OCI-LY7 (cell line): ENCODE measurements at regions of chr3 and their contacts with region 1.

Region 1: GRCh38 chr3:48400824-48401433 is 28.9 kb downstream of the FBXW12 start:
- DNase-seq: peak; percentile 79
- H3K4me3 ChIP-seq: no peak overlapping the region
- H3K27ac ChIP-seq: no peak overlapping the region
- H3K4me1 ChIP-seq: no peaks in the 10 kb centered on the region
- CTCF ChIP-seq: peak; percentile 92

Region 2: DNA sequence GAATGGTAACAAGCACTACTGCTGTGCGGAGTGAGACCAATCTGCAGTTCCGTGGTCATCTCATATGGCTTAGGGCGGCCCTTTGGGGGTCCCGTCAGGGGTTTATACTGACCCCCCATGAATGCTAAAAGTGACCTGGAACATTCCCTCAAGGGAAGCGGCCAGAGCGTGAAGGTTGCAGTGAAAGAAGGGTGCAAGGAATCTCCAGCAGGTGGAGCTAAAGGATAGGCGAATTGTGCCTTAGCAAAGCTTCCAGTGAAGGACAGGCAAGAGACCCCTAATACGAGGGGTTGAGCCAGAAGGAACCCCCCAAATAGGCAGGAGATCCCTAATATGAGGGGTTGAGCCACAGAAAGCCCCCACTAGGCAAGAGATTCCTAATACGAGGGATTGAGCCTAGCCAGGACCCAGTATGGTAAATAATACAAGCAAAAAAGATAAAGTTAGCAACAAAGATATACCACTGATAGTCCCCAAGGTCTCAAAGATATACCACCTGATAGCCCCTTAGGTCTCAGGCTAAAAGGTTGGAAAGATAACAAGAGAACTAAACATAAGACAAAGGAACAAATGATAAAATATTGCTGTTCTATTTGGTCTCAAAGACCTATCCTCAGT is 127.2 kb before region 1 on chr3:
- CTCF ChIA-PET with region 1: interaction called, 3 read pairs
- POLR2A ChIA-PET with region 1: no interaction called
- intact Hi-C with region 1: loop called (anchors 1 kb)
- DNase-seq: peak; percentile 76
- H3K4me3 ChIP-seq: no peak overlapping the region
- H3K27ac ChIP-seq: no peak overlapping the region
- H3K4me1 ChIP-seq: no peaks in the 10 kb centered on the region
- CTCF ChIP-seq: peak; percentile 88

Region 3: GRCh38 chr3:48422270-48422669 is 21.3 kb after region 1 on chr3:
- CTCF ChIA-PET with region 1: no interaction called
- POLR2A ChIA-PET with region 1: interaction called, 7 read pairs
- intact Hi-C with region 1: loop called (anchors 1 kb)
- DNase-seq: peak; percentile 43
- H3K4me3 ChIP-seq: no peak overlapping the region
- H3K27ac ChIP-seq: no peak overlapping the region
- H3K4me1 ChIP-seq: no peaks in the 10 kb centered on the region
- CTCF ChIP-seq: peak; percentile 63

Region 4: GRCh38 chr3:48507351-48508061 is 106.6 kb after region 1 on chr3:
- CTCF ChIA-PET with region 1: interaction called, 3 read pairs
- POLR2A ChIA-PET with region 1: no interaction called
- intact Hi-C with region 1: loop called (anchors 2 kb)
- DNase-seq: peak; percentile 78
- H3K4me3 ChIP-seq: no peak overlapping the region
- H3K27ac ChIP-seq: no peak overlapping the region
- H3K4me1 ChIP-seq: no peaks in the 10 kb centered on the region
- CTCF ChIP-seq: peak; percentile 87

Region 5: DNA sequence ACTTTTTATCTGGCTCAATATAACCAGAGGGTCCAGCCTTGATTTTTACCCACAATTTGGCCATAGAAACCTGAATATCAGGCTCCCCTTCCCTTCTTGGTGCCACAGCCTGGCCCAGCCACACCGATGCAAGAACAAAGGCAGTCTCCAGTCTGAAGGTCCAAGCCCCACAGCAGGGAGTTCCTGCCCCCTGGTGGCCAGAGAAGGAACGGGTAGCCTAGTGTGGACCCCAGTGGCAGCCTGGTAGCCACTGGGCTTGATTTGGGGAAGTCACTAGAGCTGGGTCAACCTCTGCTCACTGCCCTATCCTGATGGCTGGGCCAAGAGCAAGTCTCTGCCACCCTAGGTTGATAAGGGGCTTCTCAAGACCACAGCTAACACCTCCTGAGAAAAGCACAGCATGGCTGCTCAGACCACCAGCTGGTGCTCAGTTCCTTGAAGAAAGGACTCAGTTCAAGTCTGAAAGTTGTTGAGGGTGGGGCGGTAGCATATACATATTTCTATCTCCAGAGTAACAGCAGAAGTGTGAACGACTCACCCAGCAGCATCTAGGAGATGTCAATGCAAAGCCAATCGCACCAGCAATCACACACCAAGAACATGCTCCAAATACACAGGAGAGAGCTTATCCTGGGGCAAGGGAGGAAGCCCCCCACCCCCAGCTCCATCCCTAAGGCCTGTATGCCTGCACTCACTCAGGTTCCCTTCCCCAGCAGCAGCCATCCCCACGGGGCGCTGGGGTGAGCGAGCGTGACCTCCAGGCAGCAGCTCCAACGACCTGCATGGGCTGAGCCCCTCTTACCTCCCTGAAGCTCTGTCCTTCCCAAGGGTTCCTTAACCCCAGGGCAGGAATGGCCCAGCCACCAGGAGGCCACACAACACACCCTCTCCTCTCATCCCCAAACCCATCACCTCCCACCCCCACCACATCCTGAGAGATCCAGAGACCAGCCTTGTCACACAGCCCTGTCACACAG is 148.1 kb after region 1 on chr3:
- CTCF ChIA-PET with region 1: no interaction called
- POLR2A ChIA-PET with region 1: no interaction called
- intact Hi-C with region 1: loop called (anchors 2 kb)
- DNase-seq: peak; percentile 86
- H3K4me3 ChIP-seq: no peak overlapping the region
- H3K27ac ChIP-seq: no peak overlapping the region
- H3K4me1 ChIP-seq: no peaks in the 10 kb centered on the region
- CTCF ChIP-seq: peak; percentile 98

Region 6: GRCh38 chr3:48635222-48636021 is 234.5 kb after region 1 on chr3 and contains the start of gene SLC26A6:
- CTCF ChIA-PET with region 1: no interaction called
- POLR2A ChIA-PET with region 1: no interaction called
- intact Hi-C with region 1: loop called (anchors 10 kb)
- DNase-seq: peak; percentile 96
- H3K4me3 ChIP-seq: peak within 1 kb of the TSS; percentile 87
- H3K27ac ChIP-seq: peak within 1 kb of the TSS; percentile 52
- H3K4me1 ChIP-seq: peaks cover 27% of the 10 kb centered on the region
- CTCF ChIP-seq: peak; percentile 85
- total RNA-seq, gene SLC26A6: 28.4 and 42.1 TPM in 2 replicates

Region 7: GRCh38 chr3:48656061-48656840 is 255.3 kb after region 1 on chr3:
- CTCF ChIA-PET with region 1: no interaction called
- POLR2A ChIA-PET with region 1: no interaction called
- intact Hi-C with region 1: loop called (anchors 2 kb)
- DNase-seq: peak; percentile 87
- H3K4me3 ChIP-seq: peak overlapping the region; percentile 67
- H3K27ac ChIP-seq: no peak overlapping the region
- H3K4me1 ChIP-seq: peaks cover 4% of the 10 kb centered on the region
- CTCF ChIP-seq: peak; percentile 74